ENCODE measurements at regions of chr11 and their contacts with region 1.

Region 1: GRCh38 chr11:62841361-62842184 is 2.2 kb upstream of the WDR74 start:
- DNase-seq: peak; percentile 93
- H3K4me3 Mint-ChIP-seq: no peak overlapping the region
- H3K27ac Mint-ChIP-seq: no peak overlapping the region
- H3K4me1 Mint-ChIP-seq: peaks cover 23% of the 10 kb centered on the region
- H3K27me3 Mint-ChIP-seq: no peaks in the 10 kb centered on the region

Region 2: DNA sequence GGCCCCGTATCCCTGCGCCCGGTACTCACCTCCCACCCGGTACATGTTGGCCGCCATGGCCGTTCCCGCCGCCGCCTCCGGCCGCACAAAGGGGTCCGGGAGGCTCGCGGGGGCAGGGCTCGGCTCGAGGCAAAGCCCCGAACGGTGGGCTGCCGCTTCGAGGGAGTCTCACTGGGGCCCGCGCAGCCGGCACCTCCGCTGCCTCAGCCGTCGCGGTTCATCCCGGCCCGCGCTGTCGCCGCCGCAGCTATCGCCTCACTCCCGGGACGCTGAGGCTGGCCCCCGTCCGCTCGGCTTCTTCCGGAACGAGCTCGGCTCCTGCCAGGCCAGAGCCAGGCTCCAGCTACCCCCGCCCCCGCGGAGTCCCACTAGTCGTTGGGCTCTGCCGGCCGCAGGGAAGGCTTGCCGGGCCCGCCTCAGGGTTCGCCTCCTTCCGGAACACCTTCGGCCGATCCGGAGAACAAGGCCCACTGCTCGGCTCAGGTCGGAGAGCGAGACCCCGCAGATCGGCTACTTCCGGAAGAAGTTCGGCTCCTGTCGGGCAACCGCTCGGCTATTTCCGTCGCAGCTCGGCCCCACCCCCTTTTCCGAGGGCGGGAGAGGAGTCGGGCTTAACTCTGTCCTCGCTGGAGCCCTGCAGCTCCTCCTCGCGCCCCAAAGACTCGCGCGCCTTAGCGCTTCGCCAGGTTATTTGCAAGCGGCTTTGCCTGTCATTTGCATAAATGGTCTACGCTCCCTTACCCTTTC is 240.0 kb before region 1 on chr11 and contains the start of gene MTA2:
- CTCF ChIA-PET with region 1: no interaction called
- intact Hi-C with region 1: loop called (anchors 1 kb)
- DNase-seq: peak; percentile 99
- H3K4me3 Mint-ChIP-seq: peak within 1 kb of the TSS; percentile 91
- H3K27ac Mint-ChIP-seq: peak within 1 kb of the TSS; percentile 99
- H3K4me1 Mint-ChIP-seq: peaks cover 45% of the 10 kb centered on the region
- H3K27me3 Mint-ChIP-seq: no peaks in the 10 kb centered on the region
- total RNA-seq, gene MTA2: 191 to 197 TPM

Region 3: GRCh38 chr11:62665075-62665598 is 176.4 kb before region 1 on chr11 and contains the starts of genes C11orf98 and CSKMT:
- CTCF ChIA-PET with region 1: no interaction called
- intact Hi-C with region 1: loop called (anchors 1 kb)
- DNase-seq: peak; percentile 96
- H3K4me3 Mint-ChIP-seq: peak within 1 kb of the TSS; percentile 98
- H3K27ac Mint-ChIP-seq: peak within 1 kb of the TSS; percentile 88
- H3K4me1 Mint-ChIP-seq: peaks cover 42% of the 10 kb centered on the region
- H3K27me3 Mint-ChIP-seq: no peaks in the 10 kb centered on the region
- total RNA-seq, gene C11orf98: 73.5 to 76.5 TPM
- total RNA-seq, gene CSKMT: 35.2 to 44.0 TPM

Region 4: GRCh38 chr11:62771144-62772021 is 70.2 kb before region 1 on chr11 and contains the start of gene TAF6L:
- CTCF ChIA-PET with region 1: interaction called, 5 read pairs
- intact Hi-C with region 1: loop called (anchors 1 kb)
- DNase-seq: peak; percentile 95
- H3K4me3 Mint-ChIP-seq: peak within 1 kb of the TSS; percentile 80
- H3K27ac Mint-ChIP-seq: peak within 1 kb of the TSS; percentile 91
- H3K4me1 Mint-ChIP-seq: peaks cover 25% of the 10 kb centered on the region
- H3K27me3 Mint-ChIP-seq: no peaks in the 10 kb centered on the region
- total RNA-seq, gene TAF6L: 8.9 to 10.5 TPM

Region 5: DNA sequence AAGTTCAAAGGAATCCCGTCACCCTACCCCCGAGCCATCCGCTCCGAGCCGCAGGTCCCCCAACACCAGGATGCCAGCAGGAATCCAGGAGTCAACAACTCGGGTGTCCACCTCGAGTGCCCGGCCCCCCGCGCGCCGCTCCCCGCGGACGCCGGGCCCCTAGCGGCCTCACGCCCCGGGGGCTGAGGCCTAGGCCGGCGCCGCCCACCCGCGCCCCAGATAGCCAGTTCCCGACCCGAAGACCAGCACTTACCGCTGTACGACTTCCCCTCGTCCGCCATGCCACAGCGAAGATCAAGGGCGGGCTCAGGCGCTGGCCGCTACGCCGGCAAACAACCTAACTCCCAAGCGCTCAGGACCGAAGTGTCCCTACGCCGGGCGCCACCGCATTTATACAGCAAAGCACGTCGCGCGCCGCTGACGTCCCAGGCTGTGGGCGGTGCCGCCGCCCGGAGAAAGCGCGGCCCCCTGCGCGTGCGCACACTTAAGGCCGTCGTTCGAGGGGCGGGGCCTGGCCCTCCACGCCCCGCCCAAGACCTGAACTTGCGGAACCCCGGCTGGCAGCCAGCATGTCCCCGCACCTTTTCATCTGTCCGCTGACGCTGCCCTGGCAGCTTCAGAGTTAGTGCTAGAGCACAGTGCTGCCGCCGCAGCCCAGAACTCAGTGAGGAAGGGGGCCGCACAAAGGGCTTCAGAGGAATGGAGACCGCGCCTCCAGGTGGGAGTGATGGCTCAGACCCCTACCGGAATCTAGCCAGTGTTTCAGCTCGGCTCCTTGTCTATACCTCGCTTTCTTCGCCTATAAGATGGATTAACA is 36.3 kb before region 1 on chr11 and contains the start of gene NXF1:
- CTCF ChIA-PET with region 1: no interaction called
- intact Hi-C with region 1: loop called (anchors 1 kb)
- DNase-seq: peak; percentile 93
- H3K4me3 Mint-ChIP-seq: peak within 1 kb of the TSS; percentile 95
- H3K27ac Mint-ChIP-seq: peak within 1 kb of the TSS; percentile 94
- H3K4me1 Mint-ChIP-seq: peaks cover 28% of the 10 kb centered on the region
- H3K27me3 Mint-ChIP-seq: no peaks in the 10 kb centered on the region
- total RNA-seq, gene NXF1: 44.6 to 46.0 TPM

Region 6: DNA sequence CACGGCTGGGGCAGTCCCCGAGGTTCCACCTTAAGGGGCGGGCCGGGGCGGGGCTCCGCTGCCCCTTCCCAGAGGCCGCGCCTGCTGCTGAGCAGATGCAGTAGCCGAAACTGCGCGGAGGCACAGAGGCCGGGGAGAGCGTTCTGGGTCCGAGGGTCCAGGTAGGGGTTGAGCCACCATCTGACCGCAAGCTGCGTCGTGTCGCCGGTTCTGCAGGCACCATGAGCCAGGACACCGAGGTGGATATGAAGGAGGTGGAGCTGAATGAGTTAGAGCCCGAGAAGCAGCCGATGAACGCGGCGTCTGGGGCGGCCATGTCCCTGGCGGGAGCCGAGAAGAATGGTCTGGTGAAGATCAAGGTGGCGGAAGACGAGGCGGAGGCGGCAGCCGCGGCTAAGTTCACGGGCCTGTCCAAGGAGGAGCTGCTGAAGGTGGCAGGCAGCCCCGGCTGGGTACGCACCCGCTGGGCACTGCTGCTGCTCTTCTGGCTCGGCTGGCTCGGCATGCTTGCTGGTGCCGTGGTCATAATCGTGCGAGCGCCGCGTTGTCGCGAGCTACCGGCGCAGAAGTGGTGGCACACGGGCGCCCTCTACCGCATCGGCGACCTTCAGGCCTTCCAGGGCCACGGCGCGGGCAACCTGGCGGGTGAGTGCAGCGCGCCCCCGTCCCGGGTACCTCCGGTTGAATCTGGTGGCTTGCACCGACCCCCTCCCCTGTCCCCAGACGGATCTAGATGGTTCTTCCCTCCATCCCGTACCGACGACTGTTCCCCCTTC is 39.4 kb after region 1 on chr11 and contains the start of gene SLC3A2:
- CTCF ChIA-PET with region 1: interaction called, 5 read pairs
- intact Hi-C with region 1: loop called (anchors 1 kb)
- DNase-seq: peak; percentile 82
- H3K4me3 Mint-ChIP-seq: peak within 1 kb of the TSS; percentile 100
- H3K27ac Mint-ChIP-seq: peak within 1 kb of the TSS; percentile 100
- H3K4me1 Mint-ChIP-seq: peaks cover 49% of the 10 kb centered on the region
- H3K27me3 Mint-ChIP-seq: no peaks in the 10 kb centered on the region
- total RNA-seq, gene SLC3A2: 419 to 472 TPM

Measured in activated naive CD4-positive, alpha-beta T cell treated with anti-CD3 and anti-CD28 coated beads for 36 hours (primary cell).